ENCODE measurements at regions of chr12 and their contacts with region 1.

Region 1: GRCh38 chr12:31682136-31682962 is 22.9 kb downstream of the ETFBKMT start:
- DNase-seq: peak; percentile 71
- H3K4me3 ChIP-seq: no peak overlapping the region
- H3K27ac ChIP-seq: no peak overlapping the region
- H3K4me1 ChIP-seq: no peaks in the 10 kb centered on the region
- H3K27me3 ChIP-seq: no peaks in the 10 kb centered on the region
- CTCF ChIP-seq: peak; percentile 61

Region 2: GRCh38 chr12:31578632-31579031 is 103.7 kb before region 1 on chr12:
- intact Hi-C with region 1: no loop called
- DNase-seq: no peak
- H3K4me3 ChIP-seq: no peak overlapping the region
- H3K27ac ChIP-seq: no peak overlapping the region
- H3K4me1 ChIP-seq: no peaks in the 10 kb centered on the region
- H3K27me3 ChIP-seq: no peaks in the 10 kb centered on the region
- CTCF ChIP-seq: no peak

Region 3: DNA sequence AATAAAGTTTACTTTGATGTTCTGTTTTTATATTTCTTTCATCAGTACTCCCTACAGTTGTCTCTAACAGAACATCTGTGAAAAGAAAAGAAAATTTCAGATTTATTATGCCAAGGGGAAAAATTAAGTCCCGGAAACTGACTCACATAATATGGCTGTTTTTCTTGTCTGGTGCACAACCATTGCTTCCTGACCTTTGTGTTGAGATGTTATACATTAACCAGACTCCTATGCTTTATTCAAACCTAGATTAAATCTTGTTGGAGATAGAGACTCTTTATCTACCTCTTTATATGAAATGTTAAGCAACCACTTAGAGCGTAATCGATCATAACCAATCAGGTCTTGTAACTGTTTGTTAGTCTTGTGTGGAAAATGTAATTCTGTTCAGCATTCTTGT is 386.7 kb after region 1 on chr12:
- intact Hi-C with region 1: loop called (anchors 10 kb)
- DNase-seq: no peak
- H3K4me3 ChIP-seq: no peak overlapping the region
- H3K27ac ChIP-seq: no peak overlapping the region
- H3K4me1 ChIP-seq: no peaks in the 10 kb centered on the region
- H3K27me3 ChIP-seq: no peaks in the 10 kb centered on the region
- CTCF ChIP-seq: no peak

Region 4: GRCh38 chr12:32302218-32303173 is 620.1 kb after region 1 on chr12:
- intact Hi-C with region 1: loop called (anchors 5 kb)
- DNase-seq: no peak
- H3K4me3 ChIP-seq: no peak overlapping the region
- H3K27ac ChIP-seq: no peak overlapping the region
- H3K4me1 ChIP-seq: no peaks in the 10 kb centered on the region
- H3K27me3 ChIP-seq: no peaks in the 10 kb centered on the region
- CTCF ChIP-seq: peak; percentile 42